Kidney (tissue), 22 donors: ENCODE measurements at regions of chr9 and their contacts with region 1.

Region 1: GRCh38 chr9:71249729-71250317 is 128.4 kb upstream of the TRPM3 start:
- DNase-seq: peak in 3 of 5 donors; percentile 37 to 90 (median 84)
- H3K4me3 ChIP-seq: no peak overlapping the region
- H3K27ac ChIP-seq: no peak overlapping the region
- H3K4me1 ChIP-seq: no peaks in the 10 kb centered on the region
- H3K27me3 ChIP-seq: no peaks in the 10 kb centered on the region
- CTCF ChIP-seq: peak; percentile 63

Region 2: DNA sequence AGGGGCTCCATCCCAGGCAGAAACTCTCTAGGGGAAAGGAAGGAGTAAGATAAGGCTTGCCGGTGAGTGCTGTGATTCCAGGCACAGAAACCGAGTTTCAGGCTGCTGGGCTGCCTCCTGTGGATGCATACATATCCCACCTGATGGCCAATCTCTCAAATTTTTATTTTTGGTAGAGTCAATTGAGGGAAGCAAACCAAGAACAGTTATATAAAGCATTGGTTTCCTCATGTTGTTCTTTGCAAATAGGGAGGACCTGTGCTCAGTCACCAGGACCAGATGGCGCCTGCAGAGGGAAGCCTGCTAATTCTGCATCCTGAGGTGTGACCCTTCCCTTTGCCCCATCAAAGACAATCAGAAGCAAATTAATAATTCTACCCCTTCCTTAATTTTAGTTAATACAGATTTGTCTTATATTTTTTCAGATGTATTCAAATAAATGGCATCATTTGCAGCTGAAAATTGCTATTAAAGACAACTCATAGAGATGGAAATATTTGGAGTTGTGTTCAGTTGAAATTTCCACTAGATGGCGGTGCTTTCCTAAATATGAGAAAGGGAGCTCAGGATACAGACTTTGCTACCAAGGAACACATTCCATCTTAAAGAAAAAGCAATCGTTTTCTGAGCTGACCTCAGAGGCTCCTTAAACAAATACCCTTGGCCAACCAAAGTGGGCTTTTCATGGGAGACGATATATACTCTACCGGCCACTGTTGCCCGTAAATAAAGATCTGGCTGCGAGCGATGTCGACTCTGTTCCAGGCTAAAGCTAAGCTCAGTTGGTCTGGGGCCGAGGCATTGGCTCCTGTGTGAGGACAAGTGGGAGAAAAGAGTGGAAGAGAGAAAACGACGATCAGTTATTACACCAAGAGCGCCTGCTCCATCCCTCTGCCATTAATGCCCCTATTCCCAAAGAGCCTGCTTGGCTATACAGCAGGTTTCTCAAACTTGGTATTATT is 609.7 kb before region 1 on chr9:
- intact Hi-C with region 1: loop called (anchors 10 kb)
- DNase-seq: peak in 3 of 5 donors; percentile 24 to 83 (median 77)
- H3K4me3 ChIP-seq: no peak overlapping the region
- H3K27ac ChIP-seq: no peak overlapping the region
- H3K4me1 ChIP-seq: no peaks in the 10 kb centered on the region
- H3K27me3 ChIP-seq: no peaks in the 10 kb centered on the region
- CTCF ChIP-seq: no peak

Region 3: DNA sequence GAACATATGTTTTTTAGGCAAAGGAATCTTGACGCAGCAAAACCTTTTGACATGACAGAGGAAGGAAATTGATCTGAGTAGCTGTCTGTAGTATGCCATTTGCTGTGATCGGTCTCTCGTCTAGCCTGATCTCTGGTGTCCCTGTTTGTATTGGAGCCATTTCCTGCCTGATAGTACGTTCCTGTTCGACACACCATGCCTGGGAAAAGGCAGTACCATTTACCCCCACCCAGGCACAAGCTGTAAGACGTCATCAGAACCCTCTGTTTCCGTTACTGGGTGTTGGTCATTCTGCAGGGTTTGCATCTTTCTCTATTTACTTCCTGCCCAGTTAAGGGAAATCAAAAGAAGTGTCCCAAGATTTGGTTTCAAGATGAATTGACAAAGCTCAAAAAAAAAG is 388.8 kb after region 1 on chr9:
- intact Hi-C with region 1: no loop called
- DNase-seq: peak in 1 of 5 donors; percentile 29
- H3K4me3 ChIP-seq: no peak overlapping the region
- H3K27ac ChIP-seq: peak overlapping the region; percentile 18 to 20
- H3K4me1 ChIP-seq: peaks cover 0 to 5% (median 3%) of the 10 kb centered on the region in 3 donors
- H3K27me3 ChIP-seq: no peaks in the 10 kb centered on the region
- CTCF ChIP-seq: no peak